Activated CD4-positive, alpha-beta memory T cell treated with anti-CD3 and anti-CD28 coated beads for 36 hours (primary cell): ENCODE measurements at regions of chr1 and their contacts with region 1.

Region 1: DNA sequence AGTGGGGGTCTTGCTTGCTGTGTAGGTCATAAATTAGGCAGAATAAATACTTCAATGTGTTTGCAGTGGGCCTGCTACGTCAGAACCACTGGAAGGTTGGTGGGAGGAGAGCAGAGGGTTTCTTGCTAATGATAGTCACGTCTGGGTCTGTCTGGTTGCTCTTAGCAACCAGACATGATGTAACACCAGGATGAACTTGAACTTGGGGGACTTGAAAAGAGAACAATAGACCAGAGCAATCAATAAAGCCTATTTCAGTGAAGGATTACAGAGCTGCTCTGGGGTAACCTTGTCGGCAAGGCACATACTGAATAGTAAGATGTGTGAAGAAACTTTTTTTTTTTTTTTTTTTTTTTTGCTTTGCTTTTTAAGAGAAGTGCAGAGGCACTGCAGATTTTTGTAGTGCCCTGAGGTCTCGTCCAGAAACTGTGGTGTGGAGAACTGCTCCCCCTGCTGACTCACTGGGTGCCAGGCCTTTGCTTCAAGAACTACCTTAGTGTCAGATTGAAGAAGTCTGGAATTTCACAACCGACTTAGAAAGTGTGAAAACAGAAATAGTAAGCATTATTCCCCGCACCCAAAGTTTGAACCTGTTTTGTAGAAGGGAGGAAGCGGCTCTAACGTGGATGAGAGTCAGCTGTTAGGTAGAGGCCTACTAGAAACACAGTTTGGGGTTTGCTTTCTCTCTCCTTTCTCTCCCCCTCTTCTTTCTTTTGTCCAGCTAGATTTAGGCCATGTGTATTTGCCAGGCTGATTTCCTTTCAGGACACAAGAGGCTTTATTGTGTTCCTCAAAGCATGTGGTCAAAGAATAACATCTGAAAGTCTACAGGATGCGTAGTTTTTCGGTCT is 271.6 kb downstream of the TM2D1 start:
- DNase-seq: peak; percentile 84
- H3K4me3 Mint-ChIP-seq: peak overlapping the region; percentile 16
- H3K27ac Mint-ChIP-seq: peak overlapping the region; percentile 57
- H3K4me1 Mint-ChIP-seq: peaks cover 13% of the 10 kb centered on the region
- H3K27me3 Mint-ChIP-seq: no peaks in the 10 kb centered on the region

Region 2: DNA sequence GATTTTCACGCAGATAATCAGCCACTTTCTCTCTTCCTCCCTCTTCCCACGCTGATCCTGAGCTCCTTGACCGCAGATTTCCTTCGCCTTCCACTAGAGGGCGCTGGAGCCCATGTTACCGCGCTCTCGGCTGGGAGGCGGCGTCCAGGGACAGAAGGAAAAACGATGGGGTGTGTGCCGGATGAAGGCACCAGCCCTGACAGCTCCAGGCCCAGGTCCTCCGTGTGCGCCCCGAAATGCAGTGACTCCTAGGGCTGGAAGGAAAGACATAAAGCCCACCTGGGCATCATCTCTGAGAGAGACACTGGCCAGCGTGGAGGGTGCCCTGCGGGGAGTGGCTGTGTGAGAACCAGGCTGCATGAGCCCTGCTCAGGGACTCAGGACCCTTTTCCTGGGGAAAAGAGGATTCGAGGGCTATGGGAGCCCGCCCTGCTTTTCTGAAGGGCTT is 1481.8 kb before region 1 on chr1:
- CTCF ChIA-PET with region 1: no interaction called
- POLR2A ChIA-PET with region 1: no interaction called
- intact Hi-C with region 1: loop called (anchors 5 kb)
- DNase-seq: peak; percentile 60
- H3K4me3 Mint-ChIP-seq: no peak overlapping the region
- H3K27ac Mint-ChIP-seq: no peak overlapping the region
- H3K4me1 Mint-ChIP-seq: peaks cover 6% of the 10 kb centered on the region
- H3K27me3 Mint-ChIP-seq: peaks cover 21% of the 10 kb centered on the region

Region 3: GRCh38 chr1:60978421-60979357 is 474.6 kb before region 1 on chr1:
- CTCF ChIA-PET with region 1: interaction called, 26 read pairs
- POLR2A ChIA-PET with region 1: no interaction called
- intact Hi-C with region 1: loop called (anchors 2 kb)
- DNase-seq: peak; percentile 58
- H3K4me3 Mint-ChIP-seq: no peak overlapping the region
- H3K27ac Mint-ChIP-seq: no peak overlapping the region
- H3K4me1 Mint-ChIP-seq: peaks cover 2% of the 10 kb centered on the region
- H3K27me3 Mint-ChIP-seq: peaks cover 3% of the 10 kb centered on the region

Region 4: GRCh38 chr1:61202854-61203598 is 250.3 kb before region 1 on chr1:
- CTCF ChIA-PET with region 1: no interaction called
- POLR2A ChIA-PET with region 1: no interaction called
- intact Hi-C with region 1: loop called (anchors 5 kb)
- DNase-seq: no peak
- H3K4me3 Mint-ChIP-seq: no peak overlapping the region
- H3K27ac Mint-ChIP-seq: no peak overlapping the region
- H3K4me1 Mint-ChIP-seq: no peaks in the 10 kb centered on the region
- H3K27me3 Mint-ChIP-seq: peaks cover 3% of the 10 kb centered on the region

Region 5: GRCh38 chr1:61851849-61852669 is 398.7 kb after region 1 on chr1:
- CTCF ChIA-PET with region 1: no interaction called
- POLR2A ChIA-PET with region 1: no interaction called
- intact Hi-C with region 1: loop called (anchors 2 kb)
- DNase-seq: no peak
- H3K4me3 Mint-ChIP-seq: no peak overlapping the region
- H3K27ac Mint-ChIP-seq: no peak overlapping the region
- H3K4me1 Mint-ChIP-seq: no peaks in the 10 kb centered on the region
- H3K27me3 Mint-ChIP-seq: no peaks in the 10 kb centered on the region